ENCODE measurements at regions of chr14 and their contacts with region 1.

Region 1: DNA sequence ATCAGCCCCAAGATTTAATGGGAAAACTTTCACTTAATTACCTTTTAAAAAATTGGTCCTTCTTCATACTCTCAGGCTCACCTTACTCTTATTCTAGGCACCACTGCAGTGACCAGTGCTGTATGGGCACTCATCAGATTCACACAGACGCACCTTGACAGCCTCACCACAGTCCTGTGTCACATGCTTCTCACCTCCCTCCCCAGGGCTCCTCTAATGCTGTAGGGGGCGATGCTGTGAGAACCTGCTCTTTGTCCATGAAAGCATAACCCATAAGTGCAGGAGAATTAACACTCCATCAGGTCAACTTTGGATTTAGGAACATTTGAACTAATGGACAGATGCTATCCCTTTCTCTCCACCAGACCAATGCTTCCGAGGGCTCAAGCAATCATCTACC is 13.9 kb upstream of the PPP4R3A start:
- DNase-seq: no peak
- ATAC-seq: no peak
- H3K4me3 ChIP-seq: no peak overlapping the region
- H3K27ac ChIP-seq: no peak overlapping the region
- H3K4me1 ChIP-seq: no peaks in the 10 kb centered on the region
- H3K27me3 ChIP-seq: no peaks in the 10 kb centered on the region
- CTCF ChIP-seq: no peak

Region 2: GRCh38 chr14:91482263-91483013 is 41.5 kb before region 1 on chr14:
- CTCF ChIA-PET with region 1: no interaction called
- POLR2A ChIA-PET with region 1: no interaction called
- intact Hi-C with region 1: no loop called
- DNase-seq: peak; percentile 48
- ATAC-seq: peak; percentile 81
- H3K4me3 ChIP-seq: no peak overlapping the region
- H3K27ac ChIP-seq: no peak overlapping the region
- H3K4me1 ChIP-seq: peaks cover 6% of the 10 kb centered on the region; the same call in 1 of the 2 replicates
- H3K27me3 ChIP-seq: no peaks in the 10 kb centered on the region
- CTCF ChIP-seq: no peak

Region 3: DNA sequence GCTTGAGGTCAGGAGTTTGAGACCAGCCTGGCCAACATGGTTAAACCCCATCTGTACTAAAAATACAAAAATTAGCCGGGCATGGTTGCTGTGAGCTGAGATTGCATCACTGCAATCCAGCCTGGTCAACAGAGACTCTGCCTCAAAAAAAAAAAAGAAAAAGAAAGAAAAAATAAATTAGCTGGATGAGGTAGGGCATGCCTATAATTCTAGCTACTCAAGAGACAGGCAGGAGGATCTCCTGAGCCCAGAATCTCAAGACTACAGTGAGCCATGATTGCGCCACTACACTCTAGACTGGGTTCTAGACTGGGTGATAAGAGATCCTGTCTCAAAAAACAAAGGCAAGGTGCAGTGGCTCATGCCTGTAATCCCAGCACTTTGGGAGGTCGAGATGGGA is 30.8 kb before region 1 on chr14:
- CTCF ChIA-PET with region 1: no interaction called
- POLR2A ChIA-PET with region 1: interaction called, 10 read pairs
- intact Hi-C with region 1: no loop called
- DNase-seq: no peak
- ATAC-seq: no peak
- H3K4me3 ChIP-seq: no peak overlapping the region
- H3K27ac ChIP-seq: no peak overlapping the region
- H3K4me1 ChIP-seq: peaks cover 10% of the 10 kb centered on the region; the same call in 1 of the 2 replicates
- H3K27me3 ChIP-seq: no peaks in the 10 kb centered on the region
- CTCF ChIP-seq: no peak

Region 4: DNA sequence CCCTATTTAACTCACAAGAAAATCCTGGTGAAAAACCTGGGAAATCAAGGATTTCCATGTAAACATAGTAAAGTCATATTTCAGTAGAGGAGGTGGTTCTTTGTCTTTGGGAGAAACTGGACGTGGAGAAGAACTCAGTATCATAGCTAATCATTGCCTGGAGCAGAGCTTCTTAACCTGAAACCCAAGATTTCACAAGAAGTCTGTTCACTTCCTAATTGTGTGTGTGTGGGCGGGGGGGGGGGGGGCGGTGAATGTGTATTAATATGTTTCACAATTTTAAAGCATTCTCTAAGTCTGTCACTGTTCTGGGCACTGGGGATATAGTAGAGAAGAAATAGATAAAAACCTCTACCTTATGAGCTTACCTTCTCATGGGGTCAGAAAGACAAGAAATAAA is 82.9 kb after region 1 on chr14:
- CTCF ChIA-PET with region 1: no interaction called
- POLR2A ChIA-PET with region 1: no interaction called
- intact Hi-C with region 1: no loop called
- DNase-seq: no peak
- ATAC-seq: no peak
- H3K4me3 ChIP-seq: no peak overlapping the region
- H3K27ac ChIP-seq: no peak overlapping the region
- H3K4me1 ChIP-seq: peaks cover 11% of the 10 kb centered on the region
- H3K27me3 ChIP-seq: no peaks in the 10 kb centered on the region
- CTCF ChIP-seq: no peak

Region 5: DNA sequence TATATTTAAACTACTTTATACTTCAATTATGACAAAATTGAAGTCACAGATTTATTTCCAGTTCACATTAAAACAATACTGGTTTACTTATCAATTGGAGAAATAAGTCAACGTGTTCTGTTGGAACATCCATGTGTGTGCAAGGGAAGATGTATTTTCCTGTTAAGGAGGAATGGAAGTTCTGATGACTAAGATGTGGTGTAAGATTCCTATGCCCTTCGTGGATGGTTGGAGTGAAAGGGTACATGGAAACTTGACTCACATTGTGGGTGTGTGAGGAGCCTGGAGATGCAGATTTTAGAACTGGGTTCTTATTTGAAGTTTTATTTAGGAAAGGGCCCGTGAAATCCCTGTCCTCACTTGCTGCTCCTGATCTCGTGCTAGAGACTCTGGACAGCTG is 112.6 kb after region 1 on chr14:
- CTCF ChIA-PET with region 1: no interaction called
- POLR2A ChIA-PET with region 1: no interaction called
- intact Hi-C with region 1: no loop called
- DNase-seq: no peak
- ATAC-seq: no peak
- H3K4me3 ChIP-seq: no peak overlapping the region
- H3K27ac ChIP-seq: no peak overlapping the region
- H3K4me1 ChIP-seq: no peaks in the 10 kb centered on the region
- H3K27me3 ChIP-seq: no peaks in the 10 kb centered on the region
- CTCF ChIP-seq: no peak

Region 6: DNA sequence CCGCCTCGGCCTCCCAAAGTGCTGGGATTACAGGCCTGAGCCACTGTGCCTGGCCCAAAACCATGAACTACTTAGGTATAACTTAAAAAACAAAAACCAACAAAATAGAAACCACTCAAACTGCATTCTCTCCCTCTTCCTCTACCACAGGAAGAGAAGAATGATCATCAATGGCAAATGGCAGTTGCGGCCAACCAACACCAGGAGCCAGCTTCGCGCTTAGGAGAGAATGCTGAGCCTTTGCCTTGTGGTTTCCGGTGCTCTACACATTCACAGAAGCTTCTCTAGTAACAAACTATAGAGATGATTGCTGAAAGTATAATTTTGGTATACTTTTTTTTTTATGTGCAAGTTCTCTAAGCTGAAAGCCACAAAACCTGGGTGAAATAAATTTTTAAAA is 190.8 kb after region 1 on chr14:
- CTCF ChIA-PET with region 1: no interaction called
- POLR2A ChIA-PET with region 1: no interaction called
- intact Hi-C with region 1: no loop called
- DNase-seq: no peak
- ATAC-seq: no peak
- H3K4me3 ChIP-seq: no peak overlapping the region
- H3K27ac ChIP-seq: no peak overlapping the region
- H3K4me1 ChIP-seq: no peaks in the 10 kb centered on the region
- H3K27me3 ChIP-seq: peaks cover 19% of the 10 kb centered on the region; the same call in 1 of the 2 replicates
- CTCF ChIP-seq: 0 out of 2 replicates have a peak, but pooled peaks have one; percentile 21

Measured in PC-3 (cell line).